Ovary (tissue), 10 donors: ENCODE measurements at regions of chr22 and their contacts with region 1.

Region 1: DNA sequence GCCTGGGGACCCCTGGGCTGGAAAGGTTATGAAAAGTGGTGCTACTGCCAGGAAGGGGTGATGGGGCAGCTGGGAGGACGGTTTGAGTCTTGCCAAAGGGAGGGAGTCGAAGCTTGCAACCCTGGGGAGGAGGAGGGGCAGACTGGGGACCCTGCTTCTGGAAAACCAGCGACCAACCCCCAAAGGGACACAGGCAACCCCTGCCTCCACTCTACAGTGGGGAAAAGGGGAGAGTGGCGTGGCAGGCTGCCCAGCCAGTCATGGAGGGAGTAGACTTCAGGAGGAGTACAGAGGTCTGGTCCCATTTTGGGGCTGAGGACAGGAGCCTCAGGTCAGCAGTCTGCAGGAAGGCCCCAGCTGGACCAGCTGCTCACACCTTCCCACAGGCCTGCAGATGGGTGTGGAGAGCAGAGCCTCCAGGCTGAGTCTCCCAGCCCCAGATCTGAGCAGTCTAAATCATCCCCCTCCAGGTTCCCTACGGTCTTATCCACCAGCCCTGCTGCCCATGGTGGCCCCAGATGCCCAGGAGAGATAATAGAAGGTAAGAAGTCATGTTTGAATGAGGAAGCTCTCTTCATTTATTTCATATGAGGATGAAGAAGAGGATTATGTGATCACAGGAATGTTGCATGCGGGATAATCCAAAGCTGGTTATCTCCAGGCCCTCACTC is 3.3 kb downstream of the DDT start:
- DNase-seq: no peak
- H3K4me3 ChIP-seq: no peak overlapping the region
- H3K27ac ChIP-seq: no peak overlapping the region
- H3K4me1 ChIP-seq: no peaks in the 10 kb centered on the region
- H3K27me3 ChIP-seq: no peaks in the 10 kb centered on the region
- CTCF ChIP-seq: no peak
- EP300 ChIP-seq: no peak
- POLR2A ChIP-seq: no peak

Region 2: GRCh38 chr22:23913661-23914353 is 57.1 kb before region 1 on chr22:
- intact Hi-C with region 1: no loop called
- DNase-seq: peak; percentile 99
- H3K4me3 ChIP-seq: peak overlapping the region; percentile 59
- H3K27ac ChIP-seq: peak overlapping the region in 1 of 2 donors; percentile 75
- H3K4me1 ChIP-seq: peaks cover 6% of the 10 kb centered on the region
- H3K27me3 ChIP-seq: no peaks in the 10 kb centered on the region
- CTCF ChIP-seq: no peak
- EP300 ChIP-seq: peak; percentile 62
- POLR2A ChIP-seq: peak; percentile 78

Region 3: GRCh38 chr22:23925020-23925606 is 45.8 kb before region 1 on chr22:
- intact Hi-C with region 1: loop called in 2 of 4 experiments (anchors 5 kb)
- DNase-seq: no peak
- H3K4me3 ChIP-seq: no peak overlapping the region
- H3K27ac ChIP-seq: no peak overlapping the region
- H3K4me1 ChIP-seq: no peaks in the 10 kb centered on the region
- H3K27me3 ChIP-seq: no peaks in the 10 kb centered on the region
- CTCF ChIP-seq: no peak
- EP300 ChIP-seq: no peak
- POLR2A ChIP-seq: no peak

Region 4: GRCh38 chr22:23938328-23939016 is 32.5 kb before region 1 on chr22:
- intact Hi-C with region 1: loop called in 1 of 4 experiments (anchors 5 kb)
- DNase-seq: no peak
- H3K4me3 ChIP-seq: no peak overlapping the region
- H3K27ac ChIP-seq: no peak overlapping the region
- H3K4me1 ChIP-seq: no peaks in the 10 kb centered on the region
- H3K27me3 ChIP-seq: no peaks in the 10 kb centered on the region
- CTCF ChIP-seq: no peak
- EP300 ChIP-seq: no peak
- POLR2A ChIP-seq: no peak

Region 5: DNA sequence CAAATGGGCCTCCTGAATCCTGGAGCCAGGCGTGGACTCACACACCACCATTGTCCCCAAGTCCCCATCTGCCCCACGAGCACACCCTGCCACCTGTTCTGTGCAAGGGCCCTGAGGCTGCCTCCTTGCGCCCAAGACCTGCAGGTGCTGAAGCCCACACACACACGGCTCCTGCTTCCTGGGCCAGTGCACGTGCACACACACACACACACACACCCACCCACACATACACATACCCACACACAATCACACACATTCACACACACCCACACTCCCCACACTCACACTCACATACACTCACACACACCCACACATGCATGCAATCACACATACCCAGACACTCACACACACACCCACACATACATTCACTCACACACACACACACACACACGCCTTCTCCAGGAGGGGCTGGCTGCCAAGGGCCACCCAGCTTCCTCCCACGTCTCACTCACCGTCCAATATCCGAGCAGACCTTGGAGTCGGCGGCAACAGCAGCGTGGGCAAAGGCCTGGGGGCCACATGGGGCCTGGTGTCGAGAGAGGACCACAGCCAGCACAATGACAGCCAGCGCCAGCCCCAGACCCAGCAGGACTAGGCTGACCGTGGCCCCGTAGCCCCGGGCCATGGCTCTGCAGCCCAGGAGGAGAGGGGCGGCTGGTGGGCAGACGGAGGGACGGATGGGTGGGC is 273.3 kb after region 1 on chr22:
- intact Hi-C with region 1: no loop called
- DNase-seq: peak; percentile 54 to 73 (median 61)
- H3K4me3 ChIP-seq: peak overlapping the region; percentile 30
- H3K27ac ChIP-seq: peak overlapping the region; percentile 1 to 93
- H3K4me1 ChIP-seq: peaks cover 21% of the 10 kb centered on the region
- H3K27me3 ChIP-seq: no peaks in the 10 kb centered on the region
- CTCF ChIP-seq: no peak
- EP300 ChIP-seq: no peak
- POLR2A ChIP-seq: no peak